BJ (cell line): ENCODE measurements at regions of chr1 and their contacts with region 1.

Region 1: GRCh38 chr1:11645670-11646265 is 8.5 kb downstream of the FBXO2 start:
- DNase-seq: no peak
- H3K4me3 ChIP-seq: no peak overlapping the region
- H3K27me3 ChIP-seq: peaks cover 6% of the 10 kb centered on the region
- CTCF ChIP-seq: peak; percentile 84

Region 2: GRCh38 chr1:11237356-11237755 is 408.4 kb before region 1 on chr1:
- CTCF ChIA-PET with region 1: interaction called, 102 read pairs
- POLR2A ChIA-PET with region 1: no interaction called
- DNase-seq: no peak
- H3K4me3 ChIP-seq: no peak overlapping the region
- H3K27me3 ChIP-seq: no peaks in the 10 kb centered on the region
- CTCF ChIP-seq: no peak

Region 3: DNA sequence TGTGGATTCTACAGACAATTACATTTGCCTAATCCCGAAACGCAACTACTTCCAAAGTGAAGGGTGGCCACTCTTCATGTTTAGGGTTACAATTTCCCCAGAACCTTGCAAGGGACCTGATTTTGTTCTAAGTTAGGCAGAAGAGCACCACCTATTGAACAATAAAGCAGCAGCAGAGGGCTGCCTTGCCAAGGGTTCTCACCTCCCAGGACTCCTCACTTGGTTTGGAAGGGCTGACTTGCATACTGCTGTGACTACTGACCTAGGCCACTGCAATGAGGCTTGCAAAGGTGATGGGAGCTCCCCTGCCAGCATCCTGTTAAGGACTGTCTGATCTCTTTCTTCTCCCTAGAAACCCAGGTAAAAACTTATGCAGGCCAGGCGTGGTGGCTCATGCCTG is 397.6 kb before region 1 on chr1:
- CTCF ChIA-PET with region 1: interaction called, 102 read pairs
- POLR2A ChIA-PET with region 1: no interaction called
- DNase-seq: no peak
- H3K4me3 ChIP-seq: no peak overlapping the region
- H3K27me3 ChIP-seq: no peaks in the 10 kb centered on the region
- CTCF ChIP-seq: no peak

Region 4: DNA sequence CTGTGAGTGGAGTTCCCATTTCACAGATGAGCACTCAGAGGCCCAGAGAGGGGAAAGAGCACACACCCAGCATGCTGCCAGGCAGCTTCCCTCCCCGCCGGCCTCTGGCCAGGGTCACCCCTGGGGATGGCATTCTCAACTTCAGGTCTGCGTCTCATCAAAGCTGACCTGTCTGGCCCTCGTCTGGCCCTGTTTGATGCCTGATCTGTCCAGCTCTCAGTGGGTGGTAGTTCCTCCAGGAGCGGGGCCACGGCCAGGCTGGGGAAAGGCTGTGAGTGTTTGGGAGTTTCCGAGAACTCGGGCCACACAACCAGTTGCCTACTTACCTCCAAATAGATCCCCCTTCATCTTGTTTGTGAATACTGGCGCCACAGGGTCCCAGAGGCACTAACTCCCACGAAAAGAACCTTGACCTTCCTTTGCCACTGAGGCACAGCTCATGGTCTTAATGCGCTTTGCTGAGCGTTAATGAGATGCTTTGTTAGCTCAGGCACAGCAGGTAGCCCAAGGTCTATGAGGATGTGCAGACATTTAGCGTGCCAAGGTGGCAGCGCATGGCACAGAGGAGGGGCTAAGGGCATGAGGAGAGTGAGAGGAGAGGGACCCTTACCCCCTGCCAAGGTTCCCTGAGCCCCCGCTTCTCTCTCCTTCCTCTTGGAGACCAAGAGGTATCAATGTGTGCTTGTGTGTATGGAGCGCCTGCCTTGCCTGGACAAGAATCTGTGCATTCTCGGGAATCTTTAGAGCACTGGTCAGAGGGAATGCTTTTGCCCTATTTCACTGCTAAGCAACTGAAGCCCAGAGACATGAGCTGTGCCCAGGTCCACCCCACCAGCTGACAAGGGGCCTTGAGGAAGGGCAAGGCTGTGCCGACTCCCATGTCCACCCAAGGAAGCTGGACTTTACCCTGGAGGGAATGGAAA is 105.7 kb before region 1 on chr1:
- CTCF ChIA-PET with region 1: no interaction called
- POLR2A ChIA-PET with region 1: no interaction called
- DNase-seq: no peak
- H3K4me3 ChIP-seq: no peak overlapping the region
- H3K27me3 ChIP-seq: no peaks in the 10 kb centered on the region; the same call in 1 of the 2 replicates
- CTCF ChIP-seq: no peak

Region 5: DNA sequence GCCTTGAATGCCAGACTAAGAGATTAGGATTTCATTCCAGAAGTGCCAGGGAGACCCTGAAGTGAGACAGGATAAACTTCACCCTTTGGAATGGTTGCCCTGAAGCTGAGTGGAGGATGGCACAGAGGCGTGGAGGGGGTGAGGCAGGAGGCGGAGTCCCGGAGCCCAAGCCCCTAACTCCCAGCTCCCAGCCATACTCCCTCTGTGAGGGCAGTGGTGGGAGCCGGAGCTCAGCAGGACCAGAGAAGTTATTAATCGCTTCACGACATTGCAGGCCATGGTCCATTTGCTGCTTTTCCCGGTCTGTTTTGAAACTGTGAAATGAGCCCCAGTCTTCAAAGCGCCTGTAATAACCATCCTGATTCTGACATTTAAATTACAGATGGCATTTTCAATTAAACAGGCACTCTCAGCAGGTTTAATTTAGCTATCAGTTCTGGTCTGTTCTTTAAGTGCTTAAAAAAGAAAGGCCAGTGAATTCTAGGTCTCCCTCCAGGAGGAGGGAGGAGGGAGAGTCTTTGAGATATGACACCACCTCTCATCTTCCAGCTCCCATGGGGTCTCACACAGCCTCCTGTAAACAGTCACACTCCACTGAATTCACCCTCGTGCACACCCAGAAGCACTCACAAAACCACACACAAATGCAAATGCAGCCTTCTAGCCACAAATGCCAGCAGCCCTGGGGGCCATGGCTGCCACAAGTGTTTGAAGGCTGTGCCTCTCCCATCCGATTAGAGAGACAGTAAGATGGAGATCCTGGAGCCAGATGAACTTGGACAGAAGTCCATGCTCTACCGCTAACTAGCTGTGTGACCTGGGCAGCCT is 11.2 kb before region 1 on chr1:
- CTCF ChIA-PET with region 1: interaction called, 18 read pairs
- POLR2A ChIA-PET with region 1: no interaction called
- DNase-seq: no peak
- H3K4me3 ChIP-seq: no peak overlapping the region
- H3K27me3 ChIP-seq: peaks cover 4% of the 10 kb centered on the region; the same call in 1 of the 2 replicates
- CTCF ChIP-seq: no peak

Region 6: GRCh38 chr1:11822096-11822495 is 176.3 kb after region 1 on chr1:
- CTCF ChIA-PET with region 1: no interaction called
- POLR2A ChIA-PET with region 1: no interaction called
- DNase-seq: no peak
- H3K4me3 ChIP-seq: no peak overlapping the region
- H3K27me3 ChIP-seq: no peaks in the 10 kb centered on the region
- CTCF ChIP-seq: no peak